ENCODE measurements at regions of chr1 and their contacts with region 1.

Region 1: GRCh38 chr1:163315773-163316374 is 5.9 kb upstream of the NUF2 start:
- DNase-seq: peak; percentile 32 to 49 (median 43)
- H3K4me3 ChIP-seq: no peak overlapping the region
- H3K4me3 Mint-ChIP-seq: no peak overlapping the region
- H3K27ac ChIP-seq: no peak overlapping the region
- H3K27ac Mint-ChIP-seq: peak overlapping the region in 1 of 7 donors; percentile 31
- H3K4me1 ChIP-seq: peaks cover 8% of the 10 kb centered on the region
- H3K4me1 Mint-ChIP-seq: peaks cover 2 to 5% (median 3%) of the 10 kb centered on the region in 4 donors
- H3K27me3 ChIP-seq: no peaks in the 10 kb centered on the region
- H3K27me3 Mint-ChIP-seq: no peaks in the 10 kb centered on the region

Region 2: GRCh38 chr1:162854245-162854882 is 461.5 kb before region 1 on chr1:
- CTCF ChIA-PET with region 1: interaction called, 78 read pairs
- POLR2A ChIA-PET with region 1: interaction called, 4 read pairs
- intact Hi-C with region 1: loop called (anchors 1 kb)
- DNase-seq: peak in 4 of 5 donors; percentile 27 to 35 (median 32)
- H3K4me3 ChIP-seq: no peak overlapping the region
- H3K4me3 Mint-ChIP-seq: no peak overlapping the region
- H3K27ac ChIP-seq: no peak overlapping the region
- H3K27ac Mint-ChIP-seq: no peak overlapping the region
- H3K4me1 ChIP-seq: no peaks in the 10 kb centered on the region
- H3K4me1 Mint-ChIP-seq: no peaks in the 10 kb centered on the region
- H3K27me3 ChIP-seq: no peaks in the 10 kb centered on the region
- H3K27me3 Mint-ChIP-seq: peaks cover 4% of the 10 kb centered on the region in 2 donors

Region 3: GRCh38 chr1:163071405-163072255 is 244.2 kb before region 1 on chr1:
- CTCF ChIA-PET with region 1: interaction called, 61 read pairs
- POLR2A ChIA-PET with region 1: no interaction called
- intact Hi-C with region 1: no loop called
- DNase-seq: peak in 4 of 5 donors; percentile 2 to 17 (median 10)
- H3K4me3 ChIP-seq: no peak overlapping the region
- H3K4me3 Mint-ChIP-seq: no peak overlapping the region
- H3K27ac ChIP-seq: no peak overlapping the region
- H3K27ac Mint-ChIP-seq: no peak overlapping the region
- H3K4me1 ChIP-seq: no peaks in the 10 kb centered on the region
- H3K4me1 Mint-ChIP-seq: no peaks in the 10 kb centered on the region
- H3K27me3 ChIP-seq: peaks cover 9% of the 10 kb centered on the region
- H3K27me3 Mint-ChIP-seq: peaks cover 26 to 33% of the 10 kb centered on the region in 2 donors

Measured in CD4-positive, alpha-beta memory T cell (primary cell).